IMR-90 (cell line): ENCODE measurements at regions of chr6 and their contacts with region 1.

Region 1: GRCh38 chr6:4055420-4056041 is 23.4 kb downstream of the FAM217A start:
- DNase-seq: peak; percentile 89
- ATAC-seq: peak; percentile 70
- H3K4me3 ChIP-seq: no peak overlapping the region
- H3K27ac ChIP-seq: peak overlapping the region; percentile 46; the same call in 1 of the 2 replicates
- H3K4me1 ChIP-seq: peaks cover 7% of the 10 kb centered on the region; the same call in 1 of the 2 replicates
- H3K27me3 ChIP-seq: no peaks in the 10 kb centered on the region
- CTCF ChIP-seq: peak; percentile 72
- POLR2A ChIP-seq: no peak
- RAD21 ChIP-seq: peak; percentile 78

Region 2: DNA sequence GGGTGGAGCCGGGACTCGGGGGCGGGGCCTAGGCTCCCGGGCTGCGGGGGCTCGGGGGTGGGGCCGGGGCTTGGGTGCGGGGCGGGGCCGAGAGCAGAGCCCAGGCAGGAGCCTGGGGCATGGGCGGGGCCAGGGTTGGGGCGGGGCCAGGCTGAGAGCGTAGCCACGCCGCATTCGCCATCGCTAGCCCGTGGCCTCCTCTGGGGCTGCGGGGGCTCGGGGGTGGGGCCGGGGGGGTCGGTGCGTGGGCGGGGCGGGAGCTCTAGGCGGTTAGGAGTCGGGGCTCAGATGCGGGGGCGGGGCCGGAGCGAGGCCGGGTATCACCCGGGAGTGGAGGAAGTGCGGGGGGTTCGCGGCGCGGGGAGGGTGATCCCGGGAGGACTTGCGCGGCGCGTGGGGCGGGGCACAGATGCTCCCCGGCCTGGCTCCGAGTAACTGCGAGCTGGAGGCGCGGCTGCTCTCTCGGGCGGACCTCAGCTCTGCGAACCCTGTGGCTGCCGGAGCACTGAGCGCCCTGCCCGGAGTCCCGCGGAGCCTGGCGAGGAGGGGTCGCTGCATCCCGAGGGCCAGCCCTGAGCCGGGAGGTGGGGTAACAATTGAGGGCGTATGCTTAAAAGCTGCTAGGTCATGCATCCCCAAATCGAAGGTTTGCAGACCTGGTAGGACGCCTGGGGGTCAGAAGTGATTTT is 80.3 kb after region 1 on chr6:
- CTCF ChIA-PET with region 1: interaction called, 5 read pairs
- POLR2A ChIA-PET with region 1: interaction called, 7 read pairs
- dilution Hi-C with region 1: no loop called
- in situ Hi-C with region 1: no loop called
- intact Hi-C with region 1: loop called (anchors 5 kb)
- DNase-seq: peak; percentile 90
- ATAC-seq: peak; percentile 95
- H3K4me3 ChIP-seq: peak overlapping the region; percentile 93
- H3K27ac ChIP-seq: peak overlapping the region; percentile 95
- H3K4me1 ChIP-seq: peaks cover 5% of the 10 kb centered on the region
- H3K27me3 ChIP-seq: no peaks in the 10 kb centered on the region
- CTCF ChIP-seq: no peak
- POLR2A ChIP-seq: no peak
- RAD21 ChIP-seq: no peak

Region 3: DNA sequence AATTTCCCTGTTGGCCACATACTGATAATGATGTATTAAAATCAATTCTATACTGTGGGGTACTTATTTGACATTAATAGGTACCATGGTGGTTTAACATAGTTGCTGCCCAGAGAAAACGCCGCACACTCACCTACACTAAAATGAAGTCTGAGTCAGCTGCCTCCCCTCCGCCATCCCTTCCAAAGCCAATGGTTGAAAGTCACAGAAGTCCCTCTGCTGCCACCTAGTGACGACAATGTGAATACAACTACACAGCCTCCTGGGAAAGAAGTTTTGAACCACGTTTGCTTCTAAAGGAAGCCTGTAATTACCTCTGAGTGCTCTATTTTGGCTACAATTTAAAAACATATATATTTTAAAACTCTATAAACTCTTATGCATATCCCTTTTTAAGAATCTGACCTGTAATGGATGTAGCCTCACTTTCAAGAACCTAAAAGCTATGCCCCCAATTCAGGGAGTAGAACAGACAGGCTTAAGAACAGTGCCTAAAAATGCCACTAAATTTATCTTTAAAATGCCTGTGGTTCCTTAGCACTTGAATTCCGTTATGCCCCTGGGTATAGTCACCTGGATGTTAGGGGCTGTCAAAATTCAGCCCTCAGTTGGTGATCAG is 100.4 kb after region 1 on chr6:
- CTCF ChIA-PET with region 1: interaction called, 3 read pairs
- POLR2A ChIA-PET with region 1: interaction called, 3 read pairs
- dilution Hi-C with region 1: no loop called
- in situ Hi-C with region 1: loop called (anchors 5 kb)
- intact Hi-C with region 1: loop called (anchors 1 kb)
- DNase-seq: peak; percentile 86
- ATAC-seq: peak; percentile 99
- H3K4me3 ChIP-seq: no peak overlapping the region
- H3K27ac ChIP-seq: no peak overlapping the region
- H3K4me1 ChIP-seq: no peaks in the 10 kb centered on the region
- H3K27me3 ChIP-seq: no peaks in the 10 kb centered on the region
- CTCF ChIP-seq: peak; percentile 87
- POLR2A ChIP-seq: no peak
- RAD21 ChIP-seq: peak; percentile 89

Region 4: DNA sequence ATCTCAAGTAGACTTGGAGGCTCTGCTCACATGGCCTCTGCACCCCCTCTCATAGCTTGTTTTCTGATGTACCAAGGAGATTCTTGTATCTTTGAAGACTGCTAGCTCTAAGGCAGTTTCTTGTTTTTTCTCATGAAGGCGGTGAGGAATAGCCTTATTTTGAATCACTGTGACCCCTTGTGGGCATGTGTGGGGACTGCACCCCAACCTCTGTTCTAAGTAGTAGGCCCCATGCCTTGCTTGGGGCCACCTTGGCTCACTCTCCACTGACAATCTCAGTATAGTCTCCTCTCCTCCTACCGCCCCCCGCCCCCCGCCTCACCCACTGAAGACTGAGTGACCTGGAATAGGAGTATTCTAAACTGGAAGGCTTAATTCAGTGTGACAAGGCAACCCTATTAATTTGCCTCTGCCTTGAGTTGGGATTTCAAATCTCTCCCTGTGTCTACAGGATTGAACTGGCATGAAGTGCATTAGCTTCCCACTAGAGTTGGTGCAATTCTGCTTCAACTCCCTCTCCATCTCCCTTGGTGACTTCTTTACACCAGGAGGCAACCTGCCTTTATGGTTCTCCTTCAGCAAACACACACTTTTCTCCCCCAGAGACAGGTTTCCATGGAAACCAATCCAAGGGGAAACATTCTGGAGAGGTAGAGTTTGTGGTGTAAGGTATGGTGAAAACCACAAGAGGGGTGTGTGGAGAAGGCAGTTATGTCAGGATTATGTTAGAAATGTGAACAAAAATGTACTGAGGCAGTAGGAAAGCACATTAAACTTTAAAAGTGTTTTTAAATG is 155.3 kb after region 1 on chr6:
- CTCF ChIA-PET with region 1: interaction called, 5 read pairs
- POLR2A ChIA-PET with region 1: no interaction called
- dilution Hi-C with region 1: no loop called
- in situ Hi-C with region 1: no loop called
- intact Hi-C with region 1: loop called (anchors 1 kb)
- DNase-seq: peak; percentile 68
- ATAC-seq: peak; percentile 100
- H3K4me3 ChIP-seq: no peak overlapping the region
- H3K27ac ChIP-seq: no peak overlapping the region
- H3K4me1 ChIP-seq: no peaks in the 10 kb centered on the region
- H3K27me3 ChIP-seq: peaks cover 3% of the 10 kb centered on the region
- CTCF ChIP-seq: peak; percentile 77
- POLR2A ChIP-seq: no peak
- RAD21 ChIP-seq: peak; percentile 78

Region 5: DNA sequence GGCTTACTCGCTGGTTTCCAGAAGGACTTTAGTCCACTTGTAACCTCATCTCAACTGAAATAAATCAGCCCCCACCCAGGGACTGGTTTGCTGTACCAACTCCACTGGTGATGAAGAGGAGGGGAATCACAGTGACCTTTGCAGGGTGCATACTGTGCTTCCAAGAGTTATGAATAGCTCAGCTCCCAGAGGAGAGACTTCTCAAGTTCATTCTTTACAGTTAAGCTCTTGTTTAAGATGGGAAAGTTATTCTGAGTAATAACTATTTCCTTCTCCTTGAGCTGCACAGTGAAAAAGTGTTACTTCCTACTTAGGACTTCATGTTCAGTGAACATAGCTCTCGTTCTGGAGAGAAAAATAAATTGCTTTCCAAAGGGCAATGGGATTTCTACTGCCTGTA is 246.3 kb after region 1 on chr6:
- CTCF ChIA-PET with region 1: no interaction called
- POLR2A ChIA-PET with region 1: no interaction called
- dilution Hi-C with region 1: no loop called
- in situ Hi-C with region 1: no loop called
- intact Hi-C with region 1: loop called (anchors 1 kb)
- DNase-seq: no peak
- ATAC-seq: peak; percentile 60
- H3K4me3 ChIP-seq: no peak overlapping the region
- H3K27ac ChIP-seq: no peak overlapping the region
- H3K4me1 ChIP-seq: peaks cover 3% of the 10 kb centered on the region
- H3K27me3 ChIP-seq: no peaks in the 10 kb centered on the region
- CTCF ChIP-seq: no peak
- POLR2A ChIP-seq: no peak
- RAD21 ChIP-seq: no peak

Region 6: GRCh38 chr6:4936681-4937041 is 881.1 kb after region 1 on chr6:
- CTCF ChIA-PET with region 1: no interaction called
- POLR2A ChIA-PET with region 1: no interaction called
- dilution Hi-C with region 1: no loop called
- in situ Hi-C with region 1: loop called (anchors 10 kb)
- intact Hi-C with region 1: no loop called
- DNase-seq: peak; percentile 80
- ATAC-seq: peak; percentile 69
- H3K4me3 ChIP-seq: no peak overlapping the region
- H3K27ac ChIP-seq: no peak overlapping the region
- H3K4me1 ChIP-seq: peaks cover 12% of the 10 kb centered on the region
- H3K27me3 ChIP-seq: no peaks in the 10 kb centered on the region
- CTCF ChIP-seq: peak; percentile 72
- POLR2A ChIP-seq: no peak
- RAD21 ChIP-seq: peak; percentile 76